ENCODE measurements at regions of chr2 and their contacts with region 1.

Region 1: DNA sequence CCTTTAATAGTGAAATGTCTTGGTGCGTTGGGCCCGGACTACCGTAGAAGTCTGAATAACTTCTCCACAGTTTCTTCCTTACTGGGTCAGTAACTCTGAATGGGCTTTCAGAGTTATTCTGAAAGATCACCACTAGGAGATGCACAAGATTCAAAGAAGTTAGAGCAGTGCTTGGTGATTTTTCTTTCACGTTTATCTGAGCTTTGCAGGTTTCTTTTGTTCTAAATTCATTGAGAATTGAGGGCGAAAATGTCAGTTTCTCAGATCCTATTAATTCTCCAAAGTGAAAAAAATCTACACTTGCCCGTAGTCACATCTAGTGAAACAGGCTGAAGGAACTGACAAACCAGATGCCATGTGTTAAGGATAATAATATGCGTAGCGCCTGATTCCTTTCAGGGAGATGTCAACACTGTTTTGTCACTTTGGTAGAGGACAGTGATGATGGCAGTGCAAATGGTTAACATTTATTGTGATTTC is 70.1 kb downstream of the QPCT start:
- DNase-seq: no peak
- ATAC-seq: peak; percentile 86
- H3K4me3 ChIP-seq: no peak overlapping the region
- H3K27ac ChIP-seq: no peak overlapping the region
- H3K4me1 ChIP-seq: peaks cover 2% of the 10 kb centered on the region in 2 donors
- H3K27me3 ChIP-seq: no peaks in the 10 kb centered on the region

Region 2: DNA sequence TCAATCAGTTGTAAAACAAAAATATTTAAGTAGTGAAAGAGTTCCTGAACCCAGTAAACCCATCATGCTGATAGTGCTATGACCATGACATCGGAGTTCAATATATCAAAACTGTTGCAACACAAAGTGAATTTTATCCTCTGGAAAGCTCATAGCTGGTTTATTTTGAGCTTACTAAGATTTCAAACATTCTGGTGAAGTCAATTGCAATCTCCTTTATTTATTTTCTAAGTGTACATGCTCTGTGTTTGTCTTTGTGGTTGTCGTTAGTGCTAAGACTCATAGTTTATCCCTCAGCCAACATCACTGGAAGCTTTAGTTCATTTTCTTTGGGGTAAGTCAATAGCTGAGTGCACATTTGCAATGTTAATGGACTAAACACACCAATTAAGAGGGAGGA is 21.8 kb after region 1 on chr2:
- intact Hi-C with region 1: no loop called
- DNase-seq: no peak
- ATAC-seq: no peak
- H3K4me3 ChIP-seq: no peak overlapping the region
- H3K27ac ChIP-seq: no peak overlapping the region
- H3K4me1 ChIP-seq: no peaks in the 10 kb centered on the region
- H3K27me3 ChIP-seq: no peaks in the 10 kb centered on the region

Region 3: DNA sequence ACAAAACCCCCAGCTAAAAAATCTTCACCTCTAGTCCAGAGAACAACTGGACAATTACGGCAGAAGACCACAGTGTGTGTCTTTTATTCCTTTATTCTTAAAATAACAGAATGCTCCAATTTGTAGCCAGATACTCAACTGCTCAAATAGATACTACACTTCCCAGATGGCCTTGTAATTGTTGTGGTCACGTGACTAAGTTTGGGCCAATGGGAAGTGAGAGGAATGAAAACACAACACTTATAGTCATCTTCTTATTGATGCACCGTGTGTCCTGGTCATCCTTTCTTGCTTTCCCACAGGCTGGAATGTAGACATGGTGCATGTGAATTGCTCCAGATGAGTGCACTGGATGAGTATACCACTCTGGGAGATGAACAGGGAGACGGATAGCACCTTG is 111.8 kb after region 1 on chr2:
- intact Hi-C with region 1: loop called (anchors 5 to 10 kb)
- DNase-seq: no peak
- ATAC-seq: no peak
- H3K4me3 ChIP-seq: no peak overlapping the region
- H3K27ac ChIP-seq: no peak overlapping the region
- H3K4me1 ChIP-seq: peaks cover 0 to 3% of the 10 kb centered on the region in 2 donors
- H3K27me3 ChIP-seq: no peaks in the 10 kb centered on the region

Region 4: DNA sequence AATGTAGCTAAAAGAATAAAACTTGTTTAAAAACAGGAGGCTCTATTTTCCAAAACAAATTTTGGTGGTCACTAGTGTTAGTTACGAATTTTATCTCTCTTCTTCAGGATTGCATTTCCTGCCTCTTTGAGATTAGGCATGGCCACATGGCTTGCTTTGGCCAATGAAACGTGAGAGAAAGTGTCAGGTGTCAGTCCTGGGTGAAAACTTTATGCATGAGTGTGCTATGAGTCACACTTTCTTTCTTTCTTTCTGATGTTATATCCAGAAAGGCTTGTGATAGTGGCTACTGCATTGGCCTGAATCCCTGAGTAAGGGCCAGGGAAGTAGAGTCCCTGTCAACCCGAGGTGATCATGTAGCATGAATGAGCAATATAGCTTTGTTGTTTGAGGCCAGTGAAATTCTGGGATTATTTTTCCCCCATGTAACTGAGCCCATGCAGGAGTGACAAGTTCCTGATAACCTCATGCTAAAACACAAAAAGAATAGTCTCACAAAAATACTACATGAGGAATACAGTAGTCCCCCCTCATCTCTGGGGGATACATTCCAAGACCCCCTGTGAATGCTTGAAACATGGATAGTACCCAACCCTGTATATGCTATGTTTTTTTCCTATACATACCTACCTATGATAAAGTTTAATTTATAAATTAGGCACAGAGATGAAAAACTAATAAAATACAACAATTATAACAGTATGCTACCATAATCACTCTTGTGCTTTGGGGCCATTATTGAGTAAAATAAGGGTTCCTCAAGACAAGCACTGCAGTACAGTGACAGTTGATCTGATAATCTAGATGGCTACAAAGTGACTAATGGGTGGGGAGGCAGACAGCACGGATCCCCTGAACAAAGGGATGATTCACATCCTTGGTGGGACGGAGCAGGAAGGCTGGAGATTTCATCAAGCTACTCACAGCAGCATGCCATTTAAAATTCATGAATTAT is 147.4 kb after region 1 on chr2:
- intact Hi-C with region 1: loop called in 1 of 2 experiments (anchors 10 kb)
- DNase-seq: no peak
- ATAC-seq: no peak
- H3K4me3 ChIP-seq: no peak overlapping the region
- H3K27ac ChIP-seq: no peak overlapping the region
- H3K4me1 ChIP-seq: no peaks in the 10 kb centered on the region
- H3K27me3 ChIP-seq: no peaks in the 10 kb centered on the region

Region 5: DNA sequence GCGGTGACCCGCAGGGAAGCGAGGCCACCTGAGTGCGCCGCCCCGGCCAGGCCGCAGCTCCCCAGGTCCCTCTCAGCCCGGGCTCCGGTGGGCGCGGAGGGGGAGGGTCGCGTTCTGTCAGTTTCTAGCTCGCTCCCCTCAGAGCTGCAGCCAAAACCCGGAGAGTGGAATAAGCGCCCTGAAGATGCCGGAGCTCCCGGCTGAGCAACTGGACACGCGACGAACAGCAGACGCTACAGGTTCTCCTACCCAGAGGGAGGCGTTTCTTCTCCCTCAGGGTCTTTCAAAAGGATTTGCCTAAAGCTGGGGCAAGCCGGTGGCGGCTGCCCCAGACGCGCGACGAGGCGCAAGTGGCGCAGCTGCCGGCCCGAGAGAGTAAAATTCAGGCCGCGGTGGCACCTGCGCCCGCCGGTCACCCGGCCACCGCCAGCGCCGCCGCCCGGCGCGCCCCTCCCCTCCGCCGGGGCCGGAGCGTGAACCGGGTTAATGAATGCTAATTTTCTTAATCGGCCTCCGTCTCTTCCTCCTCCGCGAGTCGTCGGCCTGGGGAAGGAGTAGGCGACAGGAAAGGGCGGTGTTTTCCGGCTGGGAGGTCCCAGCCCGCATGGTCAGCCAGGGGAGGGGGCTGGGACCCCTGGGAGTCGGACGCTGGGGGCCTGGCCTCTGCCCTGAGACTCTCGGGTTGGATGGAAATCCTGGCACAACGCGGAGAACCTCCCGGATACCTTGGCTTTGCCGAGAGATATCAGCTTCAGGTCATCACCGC is 257.8 kb after region 1 on chr2:
- intact Hi-C with region 1: loop called (anchors 5 to 10 kb)
- DNase-seq: peak; percentile 84 to 89
- ATAC-seq: peak; percentile 75
- H3K4me3 ChIP-seq: peak overlapping the region; percentile 82 to 97
- H3K27ac ChIP-seq: peak overlapping the region; percentile 61 to 88
- H3K4me1 ChIP-seq: peaks cover 0 to 4% of the 10 kb centered on the region in 2 donors
- H3K27me3 ChIP-seq: no peaks in the 10 kb centered on the region

Region 6: GRCh38 chr2:37832590-37833197 is 418.2 kb after region 1 on chr2:
- intact Hi-C with region 1: loop called (anchors 1 to 2 kb)
- DNase-seq: peak; percentile 92 to 96
- ATAC-seq: peak; percentile 93
- H3K4me3 ChIP-seq: no peak overlapping the region
- H3K27ac ChIP-seq: no peak overlapping the region
- H3K4me1 ChIP-seq: peaks cover 1 to 5% of the 10 kb centered on the region in 2 donors
- H3K27me3 ChIP-seq: no peaks in the 10 kb centered on the region

Region 7: DNA sequence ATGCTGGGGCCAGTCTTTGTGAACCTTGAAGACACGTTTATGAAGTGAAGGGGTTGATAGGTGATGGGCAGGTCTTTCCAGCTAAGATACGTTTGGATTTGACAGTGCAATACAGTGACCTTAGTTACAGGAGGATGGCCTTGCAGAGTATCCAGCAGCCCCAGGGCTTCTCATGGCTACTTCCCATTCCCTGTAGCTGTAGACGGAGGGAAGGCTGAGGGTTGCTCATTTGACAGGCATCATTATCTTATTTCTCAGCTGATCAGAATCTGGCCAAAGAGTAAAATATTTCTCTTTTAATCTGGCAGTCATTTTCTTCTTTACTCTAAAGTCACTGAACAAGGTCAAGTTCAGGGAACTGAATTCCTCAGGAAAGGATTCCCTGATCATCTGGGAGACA is 425.5 kb after region 1 on chr2:
- intact Hi-C with region 1: loop called in 1 of 2 experiments (anchors 2 kb)
- DNase-seq: no peak
- ATAC-seq: no peak
- H3K4me3 ChIP-seq: no peak overlapping the region
- H3K27ac ChIP-seq: no peak overlapping the region
- H3K4me1 ChIP-seq: no peaks in the 10 kb centered on the region
- H3K27me3 ChIP-seq: peaks cover 0 to 1% of the 10 kb centered on the region in 2 donors

Region 8: GRCh38 chr2:37877457-37878315 is 463.2 kb after region 1 on chr2:
- intact Hi-C with region 1: loop called (anchors 5 kb)
- DNase-seq: no peak
- ATAC-seq: peak; percentile 70
- H3K4me3 ChIP-seq: no peak overlapping the region
- H3K27ac ChIP-seq: no peak overlapping the region
- H3K4me1 ChIP-seq: no peaks in the 10 kb centered on the region
- H3K27me3 ChIP-seq: no peaks in the 10 kb centered on the region

Measured in aorta (tissue), 5 donors.